ENCODE measurements at regions of chr9 and their contacts with region 1.

Region 1: DNA sequence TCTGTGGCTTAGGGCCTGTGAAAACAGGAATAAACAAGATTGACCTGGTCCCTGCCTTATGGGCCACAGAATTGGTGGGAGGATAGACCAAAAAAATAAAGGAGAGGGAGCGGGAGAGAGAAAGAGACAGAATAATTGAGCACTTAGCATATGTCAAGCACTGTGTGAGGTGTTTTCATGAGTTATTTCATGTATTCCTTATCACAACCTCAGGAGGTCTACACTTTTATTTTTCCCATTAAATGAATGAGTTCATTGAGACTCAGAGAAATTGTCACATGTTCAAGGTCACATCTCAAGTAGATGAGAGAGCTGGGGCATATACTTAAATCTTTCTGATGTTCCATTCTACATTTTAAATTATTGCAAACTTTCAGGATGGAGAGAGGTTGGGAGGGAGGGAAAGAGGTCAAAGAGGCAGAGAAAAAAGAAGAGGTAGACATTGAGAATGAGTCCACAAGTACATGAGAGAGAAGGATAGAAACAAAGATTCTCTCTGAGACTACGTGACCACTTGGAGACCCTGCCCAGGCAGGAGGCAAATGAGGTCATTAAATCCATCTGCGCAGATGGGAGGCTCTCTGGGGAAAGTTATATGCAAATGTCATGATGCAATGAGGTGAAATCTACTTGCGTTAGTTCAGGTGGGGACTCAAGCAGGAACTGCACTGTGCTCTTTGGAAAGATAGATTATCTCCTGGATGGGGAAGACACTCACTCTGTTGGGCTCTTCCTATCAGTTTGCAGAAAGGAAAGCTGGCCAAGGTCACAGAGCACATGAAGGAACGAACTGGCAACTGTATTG is 241.5 kb downstream of the PAPPA start:
- DNase-seq: no peak
- H3K4me3 ChIP-seq: no peak overlapping the region
- H3K4me3 Mint-ChIP-seq: no peak overlapping the region
- H3K27ac Mint-ChIP-seq: no peak overlapping the region
- H3K4me1 ChIP-seq: no peaks in the 10 kb centered on the region
- H3K4me1 Mint-ChIP-seq: no peaks in the 10 kb centered on the region
- H3K27me3 ChIP-seq: no peaks in the 10 kb centered on the region
- H3K27me3 Mint-ChIP-seq: no peaks in the 10 kb centered on the region
- CTCF ChIP-seq: no peak

Region 2: DNA sequence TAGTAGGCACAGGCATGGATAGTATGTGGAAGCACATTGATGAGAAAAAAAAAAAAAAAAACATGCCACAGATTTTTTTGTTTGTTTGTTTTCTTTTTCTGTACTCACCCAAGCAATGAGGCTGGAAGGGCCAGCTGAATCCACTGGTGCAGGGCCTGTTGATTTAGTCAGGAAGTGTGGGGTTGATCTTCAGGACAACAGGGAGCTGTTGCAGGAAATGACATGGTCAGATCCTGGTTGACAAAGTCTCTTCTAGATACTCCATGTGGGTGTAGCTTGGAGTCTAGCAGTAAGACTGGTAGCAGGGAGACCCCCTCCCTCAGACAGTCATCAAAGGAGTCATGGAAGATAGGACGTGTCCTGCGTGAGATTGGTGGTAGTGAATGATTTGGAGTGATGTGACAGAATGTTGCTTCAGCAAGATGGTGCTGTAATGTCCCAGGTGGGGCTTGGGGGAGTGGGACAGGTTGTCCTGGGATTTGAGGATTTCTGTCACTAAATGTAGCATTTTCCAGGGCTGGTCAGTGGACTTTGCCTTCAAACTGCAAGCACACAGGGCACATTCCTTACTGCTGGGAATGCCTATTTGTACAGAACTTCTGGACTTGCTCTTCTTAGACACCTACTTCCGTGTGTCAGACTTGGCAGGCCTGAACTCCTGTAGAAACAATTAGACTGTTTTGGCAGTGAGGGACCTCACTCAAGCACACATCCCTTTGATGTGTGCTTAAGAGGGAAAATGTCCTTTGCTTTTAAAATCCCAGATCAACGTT is 49.5 kb before region 1 on chr9:
- CTCF ChIA-PET with region 1: no interaction called
- POLR2A ChIA-PET with region 1: no interaction called
- intact Hi-C with region 1: loop called (anchors 5 kb)
- DNase-seq: peak; percentile 11 to 50
- H3K4me3 ChIP-seq: no peak overlapping the region
- H3K4me3 Mint-ChIP-seq: no peak overlapping the region
- H3K27ac Mint-ChIP-seq: peak overlapping the region; percentile 4
- H3K4me1 ChIP-seq: peaks cover 11% of the 10 kb centered on the region
- H3K4me1 Mint-ChIP-seq: peaks cover 15% of the 10 kb centered on the region
- H3K27me3 ChIP-seq: no peaks in the 10 kb centered on the region
- H3K27me3 Mint-ChIP-seq: peaks cover 3% of the 10 kb centered on the region
- CTCF ChIP-seq: no peak

Region 3: DNA sequence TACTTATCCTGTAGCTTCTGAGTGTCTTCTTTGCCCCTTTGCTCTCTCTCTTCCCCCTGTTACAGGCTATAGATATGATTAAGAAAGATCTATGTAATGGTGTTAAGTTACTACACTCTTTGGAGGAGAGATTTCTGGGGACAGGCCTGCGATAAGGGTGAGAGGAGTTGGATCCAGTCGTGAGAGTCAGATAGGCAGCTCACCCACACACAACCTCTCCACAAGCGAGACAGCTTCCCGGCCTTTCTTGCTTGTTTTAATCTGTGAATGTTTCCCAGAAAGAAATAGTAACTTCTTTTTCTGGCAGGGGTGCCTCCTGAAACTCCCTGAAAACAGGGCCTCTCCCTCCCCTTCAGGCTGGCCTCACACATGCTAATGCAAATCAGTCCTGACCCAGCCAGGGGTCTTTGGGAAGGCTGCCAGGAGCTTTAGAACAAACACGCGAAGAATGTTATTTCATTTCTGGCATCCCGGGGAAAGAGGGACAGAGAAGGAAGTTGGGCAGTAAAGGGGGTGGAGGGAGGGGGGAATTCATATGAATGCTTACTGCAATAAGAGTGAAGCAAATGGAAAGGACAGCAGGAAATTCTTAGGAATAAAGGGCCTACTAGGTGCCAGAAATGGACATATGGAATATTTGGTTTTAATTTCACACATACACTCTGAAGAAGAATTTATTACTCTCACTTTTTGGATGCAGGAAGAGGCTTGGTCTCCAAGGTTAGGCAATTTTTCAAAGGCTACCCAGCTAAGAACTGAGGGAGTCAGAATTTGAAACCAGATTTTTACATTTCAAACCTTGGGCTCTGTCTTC is 76.2 kb after region 1 on chr9:
- CTCF ChIA-PET with region 1: no interaction called
- POLR2A ChIA-PET with region 1: no interaction called
- intact Hi-C with region 1: no loop called
- DNase-seq: no peak
- H3K4me3 ChIP-seq: no peak overlapping the region
- H3K4me3 Mint-ChIP-seq: no peak overlapping the region
- H3K27ac Mint-ChIP-seq: no peak overlapping the region
- H3K4me1 ChIP-seq: 0 out of 2 replicates have a peak, but pooled peaks cover 3% of the 10 kb centered on the region
- H3K4me1 Mint-ChIP-seq: peaks cover 5% of the 10 kb centered on the region
- H3K27me3 ChIP-seq: no peaks in the 10 kb centered on the region
- H3K27me3 Mint-ChIP-seq: no peaks in the 10 kb centered on the region
- CTCF ChIP-seq: no peak